Lower leg skin (tissue), 4 donors: ENCODE measurements at regions of chr1 and their contacts with region 1.

Region 1: DNA sequence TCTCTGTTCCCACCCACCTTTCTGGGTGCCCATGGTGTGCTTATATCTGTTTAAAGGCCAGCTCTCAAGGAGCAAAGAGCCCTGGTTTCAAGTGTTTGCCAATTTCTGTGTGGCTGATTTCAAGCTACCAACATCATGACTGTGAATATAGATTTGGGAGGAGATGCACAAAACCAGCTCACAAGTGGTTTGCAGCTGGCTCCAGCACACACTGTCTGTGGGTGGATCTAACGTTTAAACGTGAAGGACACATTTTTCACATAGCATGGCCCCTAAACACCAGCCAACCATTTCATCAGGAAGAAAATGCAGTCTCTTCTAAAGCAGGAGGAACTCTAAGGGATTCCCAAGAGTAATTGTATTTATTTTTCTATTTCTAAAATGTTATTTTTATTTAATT is 65.2 kb downstream of the FCRL5 start:
- DNase-seq: no peak
- H3K4me3 ChIP-seq: no peak overlapping the region
- CTCF ChIP-seq: no peak
- POLR2A ChIP-seq: no peak

Region 2: DNA sequence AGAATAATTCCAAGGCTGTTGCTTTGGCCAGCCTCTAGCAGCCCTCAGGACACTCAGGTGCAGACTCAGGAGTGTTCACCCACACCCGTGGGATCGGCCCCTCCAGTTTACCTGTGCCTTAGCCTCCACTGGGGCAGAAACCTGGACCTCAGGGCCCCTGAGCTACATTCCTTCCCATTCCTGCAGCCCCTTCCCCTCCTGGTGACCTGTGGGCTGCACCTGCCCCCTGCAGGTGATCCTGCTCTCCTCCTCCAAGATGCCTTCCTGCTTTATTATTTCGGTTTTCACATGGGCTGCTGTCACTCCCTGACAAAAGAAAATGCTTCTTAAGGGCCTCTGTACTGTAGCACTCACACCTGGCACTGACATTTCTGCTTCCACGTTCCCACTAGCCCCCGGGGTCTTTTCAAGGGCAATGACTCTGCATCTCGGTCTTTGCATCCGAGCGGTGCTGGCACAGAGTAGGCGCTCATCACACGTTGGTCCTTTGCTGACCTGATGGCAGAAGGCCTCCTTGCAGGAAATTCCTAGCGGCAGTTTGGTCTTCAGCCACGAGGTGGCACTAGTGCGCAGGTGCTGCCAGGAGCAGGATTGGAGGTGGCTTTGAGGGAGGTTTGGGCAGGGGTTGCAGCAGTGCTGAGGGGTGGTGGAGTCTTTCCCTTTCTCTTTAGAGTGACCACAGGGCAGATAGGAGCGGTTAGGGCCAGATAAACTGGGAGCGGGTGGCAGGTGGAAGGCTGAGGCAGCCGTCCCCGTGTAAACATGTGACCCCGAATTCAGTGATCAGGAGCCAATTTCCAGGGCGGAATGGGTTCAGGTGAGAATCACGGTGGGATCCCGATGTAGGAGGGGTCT is 323.6 kb before region 1 on chr1:
- intact Hi-C with region 1: loop called (anchors 5 kb)
- DNase-seq: peak; percentile 53 to 89
- H3K4me3 ChIP-seq: no peak overlapping the region
- CTCF ChIP-seq: no peak
- POLR2A ChIP-seq: no peak

Region 3: DNA sequence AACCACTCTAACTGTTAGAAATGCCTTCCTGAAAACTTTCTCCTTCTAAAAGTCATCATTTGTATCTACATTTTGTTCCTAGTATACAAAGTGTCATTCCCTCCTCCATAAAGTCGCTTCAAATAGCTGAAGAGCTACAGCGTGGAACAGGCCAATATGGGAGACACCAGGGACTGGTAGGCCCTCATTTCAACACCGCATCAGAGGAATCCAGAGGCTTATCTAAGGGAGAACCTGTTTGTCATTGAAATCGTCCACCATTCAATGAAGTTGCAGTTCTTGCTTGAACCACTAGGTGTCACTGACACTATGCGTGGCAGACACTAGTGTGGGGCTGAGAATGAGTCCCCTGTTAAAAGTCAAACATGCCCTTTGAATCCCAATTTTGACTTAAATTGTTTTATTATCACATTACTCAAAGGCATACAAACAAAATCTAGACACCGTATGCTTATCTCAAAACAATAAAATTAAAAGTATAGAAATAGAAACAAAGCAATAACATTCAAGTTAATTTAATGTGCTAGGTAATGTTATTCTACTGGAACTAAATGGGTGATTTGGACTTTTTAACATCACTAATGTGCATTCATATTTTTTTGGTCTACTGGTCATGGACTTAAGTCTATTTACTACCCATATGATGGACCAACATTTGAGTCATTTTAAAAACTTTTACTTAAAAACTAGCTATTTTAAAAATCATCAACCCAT is 117.1 kb before region 1 on chr1:
- intact Hi-C with region 1: loop called (anchors 10 kb)
- DNase-seq: peak in 1 of 2 donors; percentile 38
- H3K4me3 ChIP-seq: no peak overlapping the region
- CTCF ChIP-seq: no peak
- POLR2A ChIP-seq: no peak